Activated T-helper 1 cell treated with anti-CD3 and anti-CD28 coated beads, Interleukin-12 subunit alpha, Interleukin-12 subunit beta, Interleukin-2, Interleukin-4 antibody, amounts not matched to agents 30 ng/mL and 10 ng/mL and 1 ng/mL, durations not matched to agents 14 hours and 24 hours and 36 hours (primary cell): ENCODE measurements at regions of chr1 and their contacts with region 1.

Region 1: GRCh38 chr1:234772345-234773147 is 162.6 kb upstream of the IRF2BP2 start:
- DNase-seq: peak; percentile 83
- H3K4me3 Mint-ChIP-seq: peak overlapping the region; percentile 80
- H3K27ac Mint-ChIP-seq: peak overlapping the region; percentile 100
- H3K4me1 Mint-ChIP-seq: peaks cover 56% of the 10 kb centered on the region
- H3K27me3 Mint-ChIP-seq: no peaks in the 10 kb centered on the region

Region 2: DNA sequence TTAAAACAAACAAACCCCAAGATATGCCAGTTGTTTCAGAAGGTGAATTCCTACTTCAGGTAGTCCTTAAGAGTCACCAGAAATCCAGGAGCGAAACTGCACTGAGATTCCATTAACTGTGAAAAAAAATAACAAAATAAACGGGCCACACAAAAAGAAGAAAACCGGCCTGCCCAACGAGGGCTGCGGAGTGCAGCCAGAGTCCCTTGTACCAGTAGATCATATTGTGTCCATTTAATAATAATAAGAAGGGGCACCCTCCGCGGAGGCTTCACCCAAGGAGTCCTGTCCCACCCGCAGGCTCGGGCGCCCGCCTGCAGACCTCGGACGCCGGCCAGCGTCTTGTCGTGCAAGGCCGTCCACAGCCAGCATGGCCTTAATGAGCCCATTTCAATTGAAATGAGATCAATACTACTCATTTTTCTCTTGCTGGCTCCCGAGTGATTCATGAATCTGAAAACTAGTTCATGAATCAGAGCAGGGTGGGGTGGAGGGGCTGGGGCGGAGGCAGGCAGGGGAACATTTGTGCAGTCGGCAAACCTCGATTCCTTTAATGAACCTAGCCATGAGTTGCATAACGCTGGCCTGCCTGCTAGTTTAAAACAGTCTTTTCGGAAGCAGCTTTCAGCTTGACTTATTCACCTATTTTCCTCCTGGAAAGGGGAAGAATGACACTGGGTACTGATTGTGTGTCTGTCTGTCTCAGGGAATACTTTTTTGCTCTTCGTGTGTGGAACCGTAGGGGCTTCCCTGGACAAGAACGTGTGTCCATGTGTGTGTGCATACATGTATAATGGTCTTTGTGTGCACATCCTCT is 49.4 kb before region 1 on chr1:
- intact Hi-C with region 1: loop called (anchors 1 kb)
- DNase-seq: peak; percentile 7
- H3K4me3 Mint-ChIP-seq: peak overlapping the region; percentile 70
- H3K27ac Mint-ChIP-seq: peak overlapping the region; percentile 97
- H3K4me1 Mint-ChIP-seq: peaks cover 79% of the 10 kb centered on the region
- H3K27me3 Mint-ChIP-seq: peaks cover 5% of the 10 kb centered on the region

Region 3: GRCh38 chr1:234758851-234759250 is 13.7 kb before region 1 on chr1:
- intact Hi-C with region 1: loop called (anchors 1 kb)
- DNase-seq: peak; percentile 49
- H3K4me3 Mint-ChIP-seq: peak overlapping the region; percentile 42
- H3K27ac Mint-ChIP-seq: peak overlapping the region; percentile 73
- H3K4me1 Mint-ChIP-seq: peaks cover 59% of the 10 kb centered on the region
- H3K27me3 Mint-ChIP-seq: peaks cover 10% of the 10 kb centered on the region

Region 4: DNA sequence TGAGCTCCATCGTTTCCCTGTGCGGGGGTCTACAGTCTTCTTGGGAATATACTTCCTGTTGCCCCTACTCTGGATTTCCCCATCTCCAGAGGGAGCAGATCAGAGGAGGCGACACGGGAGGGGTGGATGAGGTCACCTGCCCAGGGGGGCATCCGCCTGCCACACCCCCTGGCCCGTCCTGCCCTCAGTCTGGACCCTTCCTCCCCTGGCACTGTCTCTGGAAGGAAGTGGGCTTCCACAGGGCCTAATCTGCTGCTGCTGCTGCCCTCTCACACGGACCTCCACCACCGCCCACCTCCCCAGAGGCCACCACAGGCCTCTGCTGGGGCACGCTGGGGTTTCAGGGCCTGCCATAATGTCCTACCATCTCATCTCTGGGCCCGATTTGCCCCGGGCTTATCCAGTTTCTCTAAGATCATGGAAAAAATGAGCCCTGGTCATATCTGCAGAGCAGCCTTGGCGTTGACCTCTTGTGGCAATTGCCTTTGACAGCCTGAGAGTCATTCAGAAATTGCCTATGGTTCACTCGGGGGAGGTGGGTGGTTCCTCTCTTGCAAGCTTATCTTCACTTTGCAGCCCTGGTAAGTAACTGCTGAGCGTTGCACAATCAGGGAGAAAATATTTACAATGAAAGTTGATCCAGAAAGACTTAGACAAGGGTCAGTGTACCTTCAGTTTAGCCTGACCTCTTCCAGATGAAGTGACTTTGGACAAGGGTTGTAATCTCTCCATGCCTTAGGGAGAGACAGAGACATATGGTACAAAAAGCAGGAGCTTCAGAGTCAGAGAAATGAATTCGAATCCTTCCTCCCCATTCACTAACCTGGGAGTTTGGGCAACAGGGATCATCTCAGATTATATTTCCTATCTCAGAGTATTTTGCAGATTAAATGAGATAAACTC is 103.7 kb after region 1 on chr1:
- intact Hi-C with region 1: loop called (anchors 1 kb)
- DNase-seq: no peak
- H3K4me3 Mint-ChIP-seq: peak overlapping the region; percentile 11
- H3K27ac Mint-ChIP-seq: peak overlapping the region; percentile 88
- H3K4me1 Mint-ChIP-seq: peaks cover 55% of the 10 kb centered on the region
- H3K27me3 Mint-ChIP-seq: no peaks in the 10 kb centered on the region